Right cardiac atrium (tissue), 5 donors: ENCODE measurements at regions of chr1 and their contacts with region 1.

Region 1: DNA sequence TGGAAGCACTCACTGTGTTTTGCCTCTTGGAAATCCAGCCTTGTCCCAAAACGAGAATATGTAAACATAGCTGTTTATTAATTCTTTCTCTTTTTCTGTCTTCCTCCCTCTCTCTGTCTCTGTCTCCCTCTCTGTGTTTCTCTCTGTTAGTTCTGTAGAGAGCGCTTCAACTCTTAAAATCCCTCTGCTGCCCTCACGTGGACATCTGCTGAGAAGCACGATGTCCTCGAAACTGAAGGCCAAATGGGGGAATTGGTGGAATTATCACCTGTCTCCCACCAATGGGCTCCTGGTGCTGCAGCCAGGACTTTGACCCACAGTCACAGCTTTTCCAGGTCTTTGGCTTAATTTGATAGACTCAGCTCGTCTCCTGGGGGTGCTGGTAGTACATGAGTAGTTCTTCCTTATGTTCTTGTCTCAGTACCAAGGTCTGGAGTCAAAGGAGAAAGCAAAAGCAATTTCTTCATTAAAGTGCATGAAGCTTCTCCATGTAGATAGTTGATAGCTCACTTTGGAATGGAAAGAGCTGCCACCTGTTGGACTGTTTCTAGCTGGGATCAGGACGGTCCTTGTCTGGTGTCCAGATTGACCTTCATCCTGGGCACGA is 5.5 kb upstream of the GBP6 start:
- DNase-seq: peak; percentile 76 to 94 (median 86)
- ATAC-seq: peak; percentile 85 to 90
- H3K4me3 ChIP-seq: no peak overlapping the region
- H3K27ac ChIP-seq: no peak overlapping the region
- H3K4me1 ChIP-seq: peaks cover 1% of the 10 kb centered on the region
- H3K27me3 ChIP-seq: no peaks in the 10 kb centered on the region

Region 2: GRCh38 chr1:88998716-88999115 is 359.7 kb before region 1 on chr1:
- intact Hi-C with region 1: loop called (anchors 2 to 10 kb)
- DNase-seq: no peak
- ATAC-seq: peak; percentile 87 to 88
- H3K4me3 ChIP-seq: no peak overlapping the region
- H3K27ac ChIP-seq: no peak overlapping the region
- H3K4me1 ChIP-seq: no peaks in the 10 kb centered on the region
- H3K27me3 ChIP-seq: no peaks in the 10 kb centered on the region

Region 3: DNA sequence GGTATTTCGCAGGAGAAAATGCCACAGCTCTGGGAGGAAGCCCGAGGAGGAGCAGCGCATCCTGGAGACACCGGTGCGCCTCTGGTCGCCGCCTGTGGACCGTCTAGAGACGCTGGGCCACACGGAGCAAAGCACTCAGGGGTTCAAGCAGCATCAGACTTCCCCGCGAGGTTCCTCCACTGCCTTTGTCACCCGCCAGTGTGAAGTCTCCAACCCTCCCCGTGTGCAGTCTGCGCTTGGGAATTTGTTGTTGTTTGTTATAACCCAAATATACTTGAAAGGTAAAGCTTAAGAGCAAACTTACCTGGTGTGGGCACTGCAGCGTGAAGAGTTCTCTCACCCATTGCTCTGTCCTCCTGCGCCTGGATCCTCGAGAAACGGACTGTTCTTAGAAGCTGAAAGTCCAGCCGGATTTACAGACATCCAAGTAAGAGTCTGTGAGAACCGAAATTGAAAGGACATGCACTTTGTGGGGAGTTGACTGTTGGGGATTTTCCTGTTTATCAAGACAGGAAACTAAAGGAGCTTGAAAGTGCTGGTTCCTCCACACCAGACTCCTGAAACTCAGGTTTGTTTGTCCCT is 159.8 kb before region 1 on chr1 and contains the start of gene GBP4:
- intact Hi-C with region 1: loop called in 2 of 4 experiments (anchors 10 kb)
- DNase-seq: peak; percentile 32 to 72 (median 71)
- ATAC-seq: peak; percentile 82 to 84
- H3K4me3 ChIP-seq: peak within 1 kb of the TSS; percentile 94
- H3K27ac ChIP-seq: peak within 1 kb of the TSS; percentile 88
- H3K4me1 ChIP-seq: peaks cover 4% of the 10 kb centered on the region
- H3K27me3 ChIP-seq: no peaks in the 10 kb centered on the region
- total RNA-seq, gene GBP4: 4.9 to 12.7 (median 9.1) TPM

Region 4: DNA sequence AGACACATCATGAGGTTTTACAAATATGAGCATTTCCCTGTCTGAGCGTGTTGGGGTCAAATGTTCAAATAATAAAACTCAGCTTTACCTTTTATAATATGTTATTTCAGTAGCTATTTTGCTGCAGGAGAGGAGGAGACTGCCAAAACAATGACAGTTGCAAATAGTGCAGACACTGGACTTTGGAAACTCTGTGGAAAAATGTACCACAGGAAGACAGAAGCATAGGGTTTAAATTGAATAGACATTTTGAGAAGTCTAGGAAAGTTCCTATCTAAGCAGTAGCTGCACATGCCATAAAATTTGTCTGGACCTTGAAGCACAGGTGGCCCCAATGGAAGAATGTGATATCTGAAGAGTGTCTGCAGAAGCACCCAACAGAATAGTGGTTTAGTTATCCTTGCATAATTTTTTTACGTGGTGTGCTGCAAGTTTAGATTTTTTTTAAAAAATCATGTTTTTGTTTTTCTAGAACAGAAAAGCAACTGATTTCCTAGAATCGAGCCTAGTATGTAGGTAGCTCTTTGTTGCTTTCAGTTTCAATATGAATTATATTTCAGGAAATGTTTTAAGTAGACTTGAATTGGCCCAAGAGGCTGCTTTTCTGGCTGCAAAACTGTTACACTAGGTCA is 71.7 kb before region 1 on chr1:
- intact Hi-C with region 1: no loop called
- DNase-seq: no peak
- ATAC-seq: no peak
- H3K4me3 ChIP-seq: peak overlapping the region; percentile 26
- H3K27ac ChIP-seq: no peak overlapping the region
- H3K4me1 ChIP-seq: no peaks in the 10 kb centered on the region
- H3K27me3 ChIP-seq: no peaks in the 10 kb centered on the region